OCI-LY7 (cell line): ENCODE measurements at regions of chr19 and their contacts with region 1.

Region 1: DNA sequence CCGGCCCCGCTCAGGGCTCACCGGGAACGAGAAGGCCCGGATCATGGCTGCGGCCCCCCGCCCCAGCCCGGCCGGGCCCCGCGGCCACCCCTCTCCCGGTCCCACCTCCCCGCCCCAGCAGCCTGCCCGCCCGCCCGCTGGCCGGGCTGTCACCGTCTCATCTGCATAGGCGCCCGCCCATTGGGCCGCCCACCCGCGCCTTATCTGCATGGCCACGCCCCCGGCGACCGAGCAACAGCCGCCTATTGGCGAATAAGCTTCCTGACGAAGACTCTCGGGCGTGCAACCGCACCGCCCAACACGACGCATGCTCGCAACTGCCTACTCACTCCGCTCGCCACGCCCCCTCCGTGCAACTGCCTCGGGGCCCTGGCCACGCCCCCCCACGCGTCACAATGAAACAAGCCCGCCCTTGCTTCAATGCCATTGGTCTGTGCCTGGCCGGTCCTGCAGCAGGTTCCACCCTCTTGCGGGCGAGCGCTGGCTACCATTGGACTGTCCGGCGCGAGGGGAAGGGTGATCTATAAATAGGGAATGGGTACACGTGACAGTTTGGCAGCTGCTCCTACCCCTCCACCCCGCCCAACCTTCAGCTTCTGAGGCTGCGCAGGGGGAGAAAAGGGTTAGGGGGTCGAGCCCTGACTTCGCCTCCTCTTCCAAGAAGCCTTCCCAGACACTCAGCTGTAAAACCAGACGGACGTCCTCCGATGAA is at the start of gene DACT3:
- DNase-seq: peak; percentile 100
- H3K4me3 ChIP-seq: peak within 1 kb of the TSS; percentile 64
- H3K27ac ChIP-seq: peak within 1 kb of the TSS; percentile 46
- H3K4me1 ChIP-seq: peaks cover 29% of the 10 kb centered on the region
- CTCF ChIP-seq: no peak
- total RNA-seq, gene DACT3: 0.10 and 0.44 TPM in 2 replicates

Region 2: GRCh38 chr19:46529622-46530462 is 131.3 kb before region 1 on chr19:
- CTCF ChIA-PET with region 1: no interaction called
- POLR2A ChIA-PET with region 1: no interaction called
- intact Hi-C with region 1: loop called (anchors 1 kb)
- DNase-seq: peak; percentile 65
- H3K4me3 ChIP-seq: no peak overlapping the region
- H3K27ac ChIP-seq: no peak overlapping the region
- H3K4me1 ChIP-seq: no peaks in the 10 kb centered on the region
- CTCF ChIP-seq: peak; percentile 100

Region 3: GRCh38 chr19:46614114-46614722 is 47.0 kb before region 1 on chr19:
- CTCF ChIA-PET with region 1: interaction called, 11 read pairs
- POLR2A ChIA-PET with region 1: interaction called, 3 read pairs
- intact Hi-C with region 1: loop called (anchors 1 kb)
- DNase-seq: peak; percentile 84
- H3K4me3 ChIP-seq: no peak overlapping the region
- H3K27ac ChIP-seq: peak overlapping the region; percentile 7
- H3K4me1 ChIP-seq: peaks cover 65% of the 10 kb centered on the region
- CTCF ChIP-seq: peak; percentile 95

Region 4: DNA sequence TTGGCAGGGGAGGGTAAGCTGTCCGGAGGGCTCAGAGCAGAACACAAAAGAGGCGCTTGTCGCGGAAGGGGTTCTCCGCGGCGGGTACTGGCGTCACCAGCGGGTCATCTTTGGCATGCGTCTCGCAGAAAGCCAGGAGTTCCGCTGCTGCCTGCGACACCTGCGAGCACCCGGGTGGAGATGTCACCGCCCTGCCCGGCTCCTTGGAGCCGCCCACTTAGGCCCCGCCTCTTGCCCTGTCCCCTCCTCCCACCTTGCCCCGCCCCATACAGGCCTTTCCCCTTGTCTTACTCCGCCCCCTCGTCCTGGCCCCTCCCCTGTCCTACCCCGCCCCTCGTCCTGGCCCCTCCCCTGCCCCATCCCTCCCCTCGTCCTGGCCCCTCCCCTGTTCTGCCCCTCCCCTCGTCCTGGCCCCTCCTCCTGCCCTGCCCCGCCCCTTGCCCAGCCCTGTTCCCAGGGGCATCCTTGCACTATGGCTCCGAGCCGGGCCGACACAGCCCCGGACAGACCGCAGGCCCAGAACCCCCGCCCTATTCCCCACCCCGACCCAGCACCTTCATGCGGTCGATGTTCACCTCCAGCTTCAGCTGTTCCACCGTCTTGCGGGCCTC is 27.0 kb before region 1 on chr19:
- CTCF ChIA-PET with region 1: interaction called, 6 read pairs
- POLR2A ChIA-PET with region 1: interaction called, 3 read pairs
- intact Hi-C with region 1: loop called (anchors 1 kb)
- DNase-seq: peak; percentile 89
- H3K4me3 ChIP-seq: peak overlapping the region; percentile 45
- H3K27ac ChIP-seq: no peak overlapping the region
- H3K4me1 ChIP-seq: peaks cover 39% of the 10 kb centered on the region
- CTCF ChIP-seq: no peak

Region 5: DNA sequence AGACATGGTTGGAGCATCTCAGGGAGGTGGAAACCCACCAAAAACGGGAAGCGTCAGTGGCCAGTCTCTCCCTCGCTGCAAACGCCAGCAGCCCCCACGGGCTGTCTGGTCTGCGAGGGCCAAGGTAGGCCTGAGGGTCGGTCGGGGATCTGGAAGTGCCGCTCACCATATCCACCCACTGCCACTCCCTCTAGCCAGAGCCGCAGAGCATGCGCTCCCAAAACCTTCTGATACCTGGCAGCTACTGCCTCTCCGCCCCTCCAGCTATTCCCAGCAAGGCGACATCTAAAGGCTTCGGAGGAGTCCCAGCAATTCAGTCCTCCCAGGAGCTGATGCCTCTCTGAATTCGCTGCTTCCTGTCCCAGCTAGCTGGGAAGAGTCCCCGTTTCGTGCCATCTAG is 80.3 kb after region 1 on chr19:
- CTCF ChIA-PET with region 1: interaction called, 12 read pairs
- POLR2A ChIA-PET with region 1: no interaction called
- intact Hi-C with region 1: no loop called
- DNase-seq: no peak
- H3K4me3 ChIP-seq: no peak overlapping the region
- H3K27ac ChIP-seq: no peak overlapping the region
- H3K4me1 ChIP-seq: peaks cover 21% of the 10 kb centered on the region
- CTCF ChIP-seq: no peak

Region 6: GRCh38 chr19:46776927-46777911 is 116.0 kb after region 1 on chr19:
- CTCF ChIA-PET with region 1: no interaction called
- POLR2A ChIA-PET with region 1: no interaction called
- intact Hi-C with region 1: no loop called
- DNase-seq: peak; percentile 56
- H3K4me3 ChIP-seq: no peak overlapping the region
- H3K27ac ChIP-seq: no peak overlapping the region
- H3K4me1 ChIP-seq: no peaks in the 10 kb centered on the region
- CTCF ChIP-seq: no peak